ENCODE measurements at regions of chr9 and their contacts with region 1.

Region 1: DNA sequence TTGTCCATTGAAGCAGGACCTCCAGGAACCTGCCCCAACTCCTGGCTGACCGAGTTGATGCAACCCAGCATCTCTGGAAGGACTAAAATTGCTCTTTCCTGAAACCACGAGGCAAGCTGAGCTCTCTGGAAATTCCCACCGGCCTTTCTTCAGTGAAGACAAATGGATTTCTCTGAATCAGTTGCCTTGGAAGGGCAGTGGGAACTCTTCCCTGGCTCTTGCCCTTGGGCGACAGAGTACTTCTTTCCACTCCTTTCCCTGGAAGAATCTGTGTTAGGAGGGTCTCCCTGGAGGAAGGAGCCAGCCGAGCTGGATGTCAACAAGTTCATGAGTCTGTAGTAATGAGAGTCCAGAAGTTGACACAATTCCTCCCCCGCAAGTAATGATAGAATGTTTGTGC is 6.6 kb upstream of the AMBP start:
- DNase-seq: peak in 1 of 2 donors; percentile 43
- H3K4me3 ChIP-seq: no peak overlapping the region
- H3K27ac ChIP-seq: no peak overlapping the region
- H3K4me1 ChIP-seq: peaks cover 20 to 34% (median 32%) of the 10 kb centered on the region in 4 donors
- H3K27me3 ChIP-seq: no peaks in the 10 kb centered on the region
- CTCF ChIP-seq: no peak
- EP300 ChIP-seq: no peak
- POLR2A ChIP-seq: no peak

Region 2: GRCh38 chr9:113624721-113625120 is 460.0 kb before region 1 on chr9:
- intact Hi-C with region 1: no loop called
- DNase-seq: no peak
- H3K4me3 ChIP-seq: no peak overlapping the region
- H3K27ac ChIP-seq: no peak overlapping the region
- H3K4me1 ChIP-seq: peaks cover 17 to 35% (median 25%) of the 10 kb centered on the region in 4 donors
- H3K27me3 ChIP-seq: no peaks in the 10 kb centered on the region
- CTCF ChIP-seq: no peak
- EP300 ChIP-seq: no peak
- POLR2A ChIP-seq: no peak

Region 3: GRCh38 chr9:113886466-113886865 is 198.2 kb before region 1 on chr9:
- intact Hi-C with region 1: no loop called
- DNase-seq: peak in 1 of 2 donors; percentile 50
- H3K4me3 ChIP-seq: peak overlapping the region; percentile 23 to 34 (median 26)
- H3K27ac ChIP-seq: peak overlapping the region in 4 of 5 donors; percentile 31 to 68 (median 60)
- H3K4me1 ChIP-seq: peaks cover 19 to 62% (median 41%) of the 10 kb centered on the region in 4 donors
- H3K27me3 ChIP-seq: no peaks in the 10 kb centered on the region
- CTCF ChIP-seq: no peak
- EP300 ChIP-seq: no peak
- POLR2A ChIP-seq: no peak

Region 4: DNA sequence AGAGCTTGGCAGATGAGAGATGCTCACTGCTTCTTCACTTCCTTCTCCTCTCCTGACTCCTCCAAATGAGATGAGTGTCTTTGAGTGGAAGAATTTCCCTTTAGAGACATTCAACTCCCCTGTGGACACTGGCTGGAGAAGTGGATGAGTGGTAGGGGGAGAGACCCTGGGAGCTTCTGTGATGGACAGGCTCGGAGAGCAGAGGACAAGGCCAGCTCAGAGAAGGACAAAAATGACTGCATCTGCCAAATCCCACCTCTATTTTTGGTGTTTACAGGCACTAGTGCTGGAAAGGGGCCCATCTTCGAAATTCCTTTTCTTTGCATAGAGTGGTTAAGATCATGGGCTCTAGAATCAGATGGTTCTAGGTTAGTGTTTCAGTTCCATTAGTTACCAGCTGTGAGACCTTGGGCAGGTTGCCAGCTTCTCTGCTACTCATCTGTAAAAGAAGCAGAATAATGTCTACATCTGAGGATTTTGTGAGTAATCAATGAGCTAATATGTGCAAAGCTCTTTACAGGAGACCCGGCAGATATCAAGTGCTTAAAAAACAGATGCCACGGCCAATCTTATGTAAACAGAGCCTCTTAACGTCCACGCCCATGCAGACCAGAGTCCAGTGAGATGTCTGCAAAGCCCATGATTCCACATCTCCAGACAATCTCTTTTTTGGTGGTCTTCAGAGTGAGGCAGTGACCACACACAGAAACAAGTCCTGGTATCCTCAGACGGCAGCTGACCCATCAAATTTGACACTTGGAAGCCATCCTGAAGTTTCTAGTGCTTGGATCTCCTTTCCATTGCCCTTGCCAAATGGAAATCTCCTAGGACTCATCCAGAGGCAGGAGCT is 57.1 kb after region 1 on chr9:
- intact Hi-C with region 1: no loop called
- DNase-seq: peak; percentile 37 to 63
- H3K4me3 ChIP-seq: no peak overlapping the region
- H3K27ac ChIP-seq: no peak overlapping the region
- H3K4me1 ChIP-seq: peaks cover 0 to 18% (median 11%) of the 10 kb centered on the region in 4 donors
- H3K27me3 ChIP-seq: no peaks in the 10 kb centered on the region
- CTCF ChIP-seq: no peak
- EP300 ChIP-seq: no peak
- POLR2A ChIP-seq: no peak

Region 5: GRCh38 chr9:114285166-114285867 is 200.6 kb after region 1 on chr9:
- intact Hi-C with region 1: loop called (anchors 5 kb)
- DNase-seq: peak in 1 of 2 donors; percentile 85
- H3K4me3 ChIP-seq: no peak overlapping the region
- H3K27ac ChIP-seq: no peak overlapping the region
- H3K4me1 ChIP-seq: peaks cover 0 to 9% (median 0%) of the 10 kb centered on the region in 4 donors
- H3K27me3 ChIP-seq: no peaks in the 10 kb centered on the region
- CTCF ChIP-seq: no peak
- EP300 ChIP-seq: no peak
- POLR2A ChIP-seq: no peak